ENCODE measurements at regions of chr19 and their contacts with region 1.

Region 1: GRCh38 chr19:11798391-11799330 is at the start of gene ZNF491:
- DNase-seq: peak; percentile 92
- ATAC-seq: peak; percentile 99
- H3K4me3 Mint-ChIP-seq: peak within 1 kb of the TSS; percentile 80
- H3K27ac Mint-ChIP-seq: peak within 1 kb of the TSS; percentile 78
- H3K4me1 Mint-ChIP-seq: peaks cover 14% of the 10 kb centered on the region
- H3K27me3 Mint-ChIP-seq: no peaks in the 10 kb centered on the region
- total RNA-seq, gene ZNF491: 0.96 to 1.7 TPM

Region 2: DNA sequence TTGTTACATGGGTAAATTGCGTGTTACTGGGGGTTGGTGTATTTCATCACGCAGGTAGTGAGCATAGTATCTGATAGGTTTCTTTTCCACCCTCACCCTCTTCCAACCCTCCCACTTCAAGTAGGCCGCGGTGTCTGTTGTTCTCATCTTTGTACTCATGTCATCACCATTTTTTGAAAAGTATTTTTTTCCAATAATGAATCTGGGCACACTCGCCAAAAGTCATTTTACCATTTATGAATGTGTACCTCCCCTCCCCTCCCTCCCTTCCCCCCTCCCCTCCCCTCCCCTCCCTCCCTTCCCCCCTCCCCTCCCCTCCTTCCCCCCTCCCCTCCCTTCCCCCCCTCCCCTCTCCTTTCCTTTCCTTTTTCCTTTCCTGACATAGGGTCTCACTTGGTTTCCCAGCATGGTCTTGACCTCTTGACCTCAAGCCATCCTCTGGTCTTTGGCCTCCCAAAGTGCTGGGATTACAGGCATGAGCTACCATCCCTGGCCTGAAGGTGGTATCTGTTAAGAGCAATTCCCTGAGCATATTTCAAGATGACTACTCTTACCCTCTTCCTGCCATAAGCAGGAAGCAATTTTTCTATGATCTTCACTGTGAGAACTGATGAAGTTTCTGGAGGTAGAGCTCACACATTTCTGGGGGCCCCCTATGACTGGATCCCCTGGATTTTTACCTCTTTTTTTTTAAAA is 185.7 kb before region 1 on chr19:
- CTCF ChIA-PET with region 1: no interaction called
- DNase-seq: no peak
- ATAC-seq: no peak
- H3K4me3 Mint-ChIP-seq: no peak overlapping the region
- H3K27ac Mint-ChIP-seq: no peak overlapping the region
- H3K4me1 Mint-ChIP-seq: peaks cover 3% of the 10 kb centered on the region
- H3K27me3 Mint-ChIP-seq: no peaks in the 10 kb centered on the region

Region 3: GRCh38 chr19:11814029-11814699 is 15.5 kb after region 1 on chr19 and contains the start of gene ZNF440:
- CTCF ChIA-PET with region 1: interaction called, 40 read pairs
- DNase-seq: peak; percentile 95
- ATAC-seq: peak; percentile 100
- H3K4me3 Mint-ChIP-seq: peak within 1 kb of the TSS; percentile 91
- H3K27ac Mint-ChIP-seq: peak within 1 kb of the TSS; percentile 88
- H3K4me1 Mint-ChIP-seq: peaks cover 20% of the 10 kb centered on the region
- H3K27me3 Mint-ChIP-seq: no peaks in the 10 kb centered on the region
- total RNA-seq, gene ZNF440: 11.2 to 14.9 TPM

Region 4: GRCh38 chr19:11881151-11881800 is 82.6 kb after region 1 on chr19:
- CTCF ChIA-PET with region 1: interaction called, 34 read pairs
- DNase-seq: peak; percentile 74
- ATAC-seq: peak; percentile 80
- H3K4me3 Mint-ChIP-seq: no peak overlapping the region
- H3K27ac Mint-ChIP-seq: no peak overlapping the region
- H3K4me1 Mint-ChIP-seq: peaks cover 2% of the 10 kb centered on the region
- H3K27me3 Mint-ChIP-seq: peaks cover 4% of the 10 kb centered on the region